ENCODE measurements at regions of chr20 and their contacts with region 1.

Region 1: GRCh38 chr20:53708129-53708968 is 114.7 kb upstream of the ZNF217 start:
- DNase-seq: peak in 7 of 9 donors; percentile 15 to 52 (median 18)
- ATAC-seq: peak; percentile 62
- H3K4me3 ChIP-seq: no peak overlapping the region
- H3K4me3 Mint-ChIP-seq: peak overlapping the region; percentile 61 to 88 (median 77)
- H3K27ac ChIP-seq: peak overlapping the region; percentile 58
- H3K27ac Mint-ChIP-seq: peak overlapping the region; percentile 91 to 100 (median 96)
- H3K4me1 ChIP-seq: peaks cover 22 to 42% of the 10 kb centered on the region in 2 donors
- H3K4me1 Mint-ChIP-seq: peaks cover 29 to 59% (median 57%) of the 10 kb centered on the region in 7 donors
- H3K27me3 ChIP-seq: no peaks in the 10 kb centered on the region
- H3K27me3 Mint-ChIP-seq: no peaks in the 10 kb centered on the region

Region 2: GRCh38 chr20:53594068-53595017 is 114.0 kb before region 1 on chr20:
- CTCF ChIA-PET with region 1: no interaction called
- POLR2A ChIA-PET with region 1: interaction called, 25 read pairs
- intact Hi-C with region 1: no loop called
- DNase-seq: peak; percentile 93 to 100 (median 96)
- ATAC-seq: peak; percentile 90
- H3K4me3 ChIP-seq: peak overlapping the region; percentile 81
- H3K4me3 Mint-ChIP-seq: peak overlapping the region; percentile 89 to 99 (median 92)
- H3K27ac ChIP-seq: peak overlapping the region; percentile 97
- H3K27ac Mint-ChIP-seq: peak overlapping the region; percentile 90 to 98 (median 97)
- H3K4me1 ChIP-seq: peaks cover 14 to 21% of the 10 kb centered on the region in 2 donors
- H3K4me1 Mint-ChIP-seq: peaks cover 23 to 66% (median 54%) of the 10 kb centered on the region in 7 donors
- H3K27me3 ChIP-seq: no peaks in the 10 kb centered on the region
- H3K27me3 Mint-ChIP-seq: no peaks in the 10 kb centered on the region

Region 3: GRCh38 chr20:53643031-53643832 is 65.1 kb before region 1 on chr20:
- CTCF ChIA-PET with region 1: interaction called, 4 read pairs
- POLR2A ChIA-PET with region 1: interaction called, 14 read pairs
- intact Hi-C with region 1: no loop called
- DNase-seq: peak in 8 of 9 donors; percentile 61 to 81 (median 75)
- ATAC-seq: peak; percentile 98
- H3K4me3 ChIP-seq: peak overlapping the region; percentile 56
- H3K4me3 Mint-ChIP-seq: peak overlapping the region; percentile 73 to 92 (median 85)
- H3K27ac ChIP-seq: peak overlapping the region; percentile 77
- H3K27ac Mint-ChIP-seq: peak overlapping the region; percentile 90 to 100 (median 97)
- H3K4me1 ChIP-seq: peaks cover 13 to 45% of the 10 kb centered on the region in 2 donors
- H3K4me1 Mint-ChIP-seq: peaks cover 30 to 64% (median 52%) of the 10 kb centered on the region in 7 donors
- H3K27me3 ChIP-seq: no peaks in the 10 kb centered on the region
- H3K27me3 Mint-ChIP-seq: no peaks in the 10 kb centered on the region

Region 4: GRCh38 chr20:53677447-53678314 is 30.7 kb before region 1 on chr20:
- CTCF ChIA-PET with region 1: no interaction called
- POLR2A ChIA-PET with region 1: interaction called, 4 read pairs
- intact Hi-C with region 1: loop called in 1 of 2 experiments (anchors 2 kb)
- DNase-seq: peak in 7 of 9 donors; percentile 19 to 51 (median 37)
- ATAC-seq: peak; percentile 50
- H3K4me3 ChIP-seq: peak overlapping the region; percentile 18
- H3K4me3 Mint-ChIP-seq: peak overlapping the region; percentile 30 to 88 (median 78)
- H3K27ac ChIP-seq: peak overlapping the region; percentile 51
- H3K27ac Mint-ChIP-seq: peak overlapping the region; percentile 68 to 94 (median 87)
- H3K4me1 ChIP-seq: peaks cover 0 to 25% of the 10 kb centered on the region in 2 donors
- H3K4me1 Mint-ChIP-seq: peaks cover 19 to 37% (median 34%) of the 10 kb centered on the region in 7 donors
- H3K27me3 ChIP-seq: no peaks in the 10 kb centered on the region
- H3K27me3 Mint-ChIP-seq: no peaks in the 10 kb centered on the region

Region 5: GRCh38 chr20:53750827-53751619 is 42.7 kb after region 1 on chr20:
- CTCF ChIA-PET with region 1: no interaction called
- POLR2A ChIA-PET with region 1: interaction called, 4 read pairs
- intact Hi-C with region 1: loop called (anchors 1 kb)
- DNase-seq: peak in 8 of 9 donors; percentile 21 to 60 (median 40)
- ATAC-seq: peak; percentile 61
- H3K4me3 ChIP-seq: no peak overlapping the region
- H3K4me3 Mint-ChIP-seq: peak overlapping the region; percentile 51 to 84 (median 68)
- H3K27ac ChIP-seq: peak overlapping the region; percentile 63
- H3K27ac Mint-ChIP-seq: peak overlapping the region; percentile 91 to 99 (median 96)
- H3K4me1 ChIP-seq: peaks cover 53 to 66% of the 10 kb centered on the region in 2 donors
- H3K4me1 Mint-ChIP-seq: peaks cover 45 to 77% (median 72%) of the 10 kb centered on the region in 7 donors
- H3K27me3 ChIP-seq: no peaks in the 10 kb centered on the region
- H3K27me3 Mint-ChIP-seq: no peaks in the 10 kb centered on the region

Region 6: GRCh38 chr20:53915446-53916172 is 207.3 kb after region 1 on chr20:
- CTCF ChIA-PET with region 1: interaction called, 3 read pairs
- POLR2A ChIA-PET with region 1: no interaction called
- intact Hi-C with region 1: loop called (anchors 1 to 2 kb)
- DNase-seq: peak; percentile 70 to 90 (median 88)
- ATAC-seq: peak; percentile 99
- H3K4me3 ChIP-seq: peak overlapping the region; percentile 79
- H3K4me3 Mint-ChIP-seq: peak overlapping the region; percentile 88 to 97 (median 94)
- H3K27ac ChIP-seq: peak overlapping the region; percentile 70
- H3K27ac Mint-ChIP-seq: peak overlapping the region; percentile 82 to 95 (median 90)
- H3K4me1 ChIP-seq: peaks cover 5 to 7% of the 10 kb centered on the region in 2 donors
- H3K4me1 Mint-ChIP-seq: peaks cover 15 to 37% (median 23%) of the 10 kb centered on the region in 7 donors
- H3K27me3 ChIP-seq: no peaks in the 10 kb centered on the region
- H3K27me3 Mint-ChIP-seq: no peaks in the 10 kb centered on the region